K562 (cell line): ENCODE measurements at regions of chr4 and their contacts with region 1.

Region 1: DNA sequence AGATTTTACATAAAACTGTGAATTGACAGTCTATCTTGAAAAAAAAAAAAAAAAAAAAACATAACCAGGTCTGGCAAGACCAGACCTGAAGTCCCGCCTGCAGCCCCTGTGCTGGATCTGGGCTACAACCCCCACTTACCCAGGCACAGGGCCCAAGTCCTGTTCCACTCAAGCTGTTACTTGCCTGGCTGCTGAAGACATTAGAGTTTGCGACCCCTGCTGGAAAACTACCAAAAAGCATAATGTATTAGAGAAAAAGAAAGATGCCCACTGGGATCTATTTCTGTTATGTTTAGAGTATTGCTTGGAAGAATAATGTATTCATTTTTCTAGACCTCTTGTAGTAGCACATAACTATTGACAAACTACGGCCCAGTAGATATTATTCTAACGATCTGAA is 4.7 kb downstream of the HS3ST1 start:
- DNase-seq: peak; percentile 11 to 40 (median 22)
- ATAC-seq: peak; percentile 61; the same call in 1 of the 3 replicates
- H3K4me3 ChIP-seq: no peak overlapping the region
- H3K27ac ChIP-seq: no peak overlapping the region
- H3K4me1 ChIP-seq: no peaks in the 10 kb centered on the region
- H3K27me3 ChIP-seq: no peaks in the 10 kb centered on the region
- CTCF ChIP-seq: peak; percentile 21 to 45 (median 26); a peak in 2 of 6 replicates
- EP300 ChIP-seq: no peak
- POLR2A ChIP-seq: no peak
- RAD21 ChIP-seq: peak; percentile 15 to 17; a peak in 1 of 4 replicates

Region 2: DNA sequence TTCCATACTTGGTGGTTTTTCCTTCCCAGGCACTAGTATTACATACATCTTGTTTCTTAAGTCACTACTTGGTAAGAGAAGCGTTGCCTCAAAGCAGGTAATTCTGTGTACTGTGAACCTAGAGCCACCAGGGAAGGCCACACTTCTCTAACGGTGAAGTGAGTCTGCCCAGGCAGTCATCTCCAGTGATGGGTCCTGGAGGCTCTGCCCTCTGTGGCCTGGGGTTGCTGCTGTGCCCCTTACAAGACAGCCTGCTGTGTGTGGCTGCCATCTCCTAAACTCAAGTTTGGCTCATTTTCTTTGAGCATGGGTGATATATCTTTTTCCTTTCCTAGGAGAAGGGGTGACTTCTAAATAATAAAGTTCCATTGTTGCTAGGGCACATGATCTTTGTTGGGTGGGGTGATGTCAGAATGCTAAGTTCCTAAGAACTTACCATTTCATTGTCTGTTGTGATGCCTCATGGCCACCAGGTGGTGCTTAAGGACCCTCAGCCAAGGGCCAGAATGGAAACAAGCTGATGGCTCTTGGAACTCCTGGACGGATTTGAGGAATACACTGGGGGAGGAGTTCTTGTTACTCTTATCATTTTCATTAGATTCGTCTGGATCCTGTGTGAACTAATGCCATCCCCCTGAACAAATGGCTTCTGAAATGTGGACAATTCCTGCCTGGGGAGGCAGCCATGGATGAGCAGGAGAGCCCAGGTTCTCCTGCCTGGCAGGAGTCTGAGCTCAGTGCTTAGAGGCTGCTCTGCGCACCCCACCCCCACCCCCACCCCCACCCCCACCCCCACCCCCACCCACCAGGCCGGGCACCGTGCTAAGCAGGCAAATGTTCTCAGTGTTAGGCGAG is 1266.3 kb before region 1 on chr4:
- CTCF ChIA-PET with region 1: no interaction called
- POLR2A ChIA-PET with region 1: no interaction called
- in situ Hi-C with region 1: loop called (anchors 25 kb)
- intact Hi-C with region 1: no loop called
- DNase-seq: peak; percentile 79 to 83 (median 81)
- ATAC-seq: peak; percentile 85
- H3K4me3 ChIP-seq: no peak overlapping the region
- H3K27ac ChIP-seq: no peak overlapping the region
- H3K4me1 ChIP-seq: peaks cover 0 to 11% of the 10 kb centered on the region in 2 experiments; a peak in 3 of 5 replicates
- H3K27me3 ChIP-seq: peaks cover 2 to 7% of the 10 kb centered on the region in 2 experiments; a peak in 1 of 5 replicates
- CTCF ChIP-seq: peak; percentile 87 to 94 (median 92)
- EP300 ChIP-seq: no peak
- POLR2A ChIP-seq: no peak
- RAD21 ChIP-seq: peak; percentile 87 to 96

Region 3: DNA sequence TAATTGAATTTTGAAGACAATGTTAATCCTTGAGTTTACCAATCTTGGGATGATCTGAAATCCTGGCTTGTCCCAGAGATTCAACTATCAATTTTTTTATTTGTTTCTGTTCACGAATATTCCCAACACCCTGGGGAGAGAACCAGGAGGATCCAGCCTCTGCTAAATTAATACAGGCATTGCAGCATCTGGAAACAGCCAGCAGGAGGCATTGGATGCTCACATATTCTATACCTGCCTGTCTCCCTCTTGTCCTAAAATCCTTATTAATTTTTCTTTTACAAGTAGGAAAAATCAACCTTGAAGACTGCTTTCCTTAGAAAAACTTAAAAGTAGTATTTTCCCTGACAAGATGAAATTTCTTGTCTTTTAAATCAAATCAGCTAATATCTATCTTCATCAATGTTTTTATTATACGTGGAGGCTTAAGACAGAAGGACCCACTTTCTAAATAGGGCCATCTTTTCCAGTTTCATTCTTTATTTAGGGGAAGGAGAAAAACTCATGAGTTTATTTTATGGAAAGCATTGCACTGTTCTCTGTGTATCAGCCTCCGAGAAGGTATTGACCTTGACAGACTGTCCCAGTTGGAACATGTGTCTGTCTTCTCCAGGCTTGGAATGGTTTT is 841.8 kb before region 1 on chr4:
- CTCF ChIA-PET with region 1: interaction called, 3 read pairs
- POLR2A ChIA-PET with region 1: no interaction called
- in situ Hi-C with region 1: loop called (anchors 25 kb)
- intact Hi-C with region 1: loop called (anchors 10 kb)
- DNase-seq: peak; percentile 37 to 60 (median 52)
- ATAC-seq: peak; percentile 85
- H3K4me3 ChIP-seq: no peak overlapping the region
- H3K27ac ChIP-seq: no peak overlapping the region
- H3K4me1 ChIP-seq: no peaks in the 10 kb centered on the region
- H3K27me3 ChIP-seq: no peaks in the 10 kb centered on the region
- CTCF ChIP-seq: peak; percentile 60 to 87 (median 74)
- EP300 ChIP-seq: no peak
- POLR2A ChIP-seq: no peak
- RAD21 ChIP-seq: peak; percentile 76 to 83